OCI-LY7 (cell line): ENCODE measurements at regions of chr2 and their contacts with region 1.

Region 1: DNA sequence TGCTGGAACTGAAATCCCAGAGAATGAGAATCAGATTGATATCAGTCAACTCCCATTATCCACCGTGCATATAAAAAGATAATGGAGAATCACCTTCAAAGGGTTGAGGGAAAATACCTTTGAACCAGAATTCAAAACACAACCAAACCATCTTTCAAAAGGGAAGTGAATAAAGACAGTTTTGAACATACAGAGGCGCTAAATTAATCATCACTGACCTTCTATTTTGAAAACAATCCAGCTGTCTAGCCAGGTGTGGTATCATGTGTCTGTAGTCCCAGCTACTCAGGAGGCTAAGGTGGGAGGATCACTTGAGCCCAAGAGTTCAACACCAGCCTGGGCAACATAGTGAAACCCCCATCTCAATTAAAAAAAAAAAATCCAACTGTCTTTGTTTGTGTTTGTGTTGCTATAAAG is 63.6 kb downstream of the TRABD2A start:
- DNase-seq: peak; percentile 83
- H3K4me3 ChIP-seq: peak overlapping the region; percentile 25
- H3K27ac ChIP-seq: peak overlapping the region; percentile 85
- H3K4me1 ChIP-seq: peaks cover 65% of the 10 kb centered on the region
- CTCF ChIP-seq: no peak

Region 2: GRCh38 chr2:84888401-84889276 is 71.4 kb after region 1 on chr2:
- CTCF ChIA-PET with region 1: no interaction called
- POLR2A ChIA-PET with region 1: interaction called, 3 read pairs
- intact Hi-C with region 1: loop called (anchors 2 kb)
- DNase-seq: peak; percentile 83
- H3K4me3 ChIP-seq: peak overlapping the region; percentile 57
- H3K27ac ChIP-seq: peak overlapping the region; percentile 57
- H3K4me1 ChIP-seq: peaks cover 19% of the 10 kb centered on the region
- CTCF ChIP-seq: no peak

Region 3: DNA sequence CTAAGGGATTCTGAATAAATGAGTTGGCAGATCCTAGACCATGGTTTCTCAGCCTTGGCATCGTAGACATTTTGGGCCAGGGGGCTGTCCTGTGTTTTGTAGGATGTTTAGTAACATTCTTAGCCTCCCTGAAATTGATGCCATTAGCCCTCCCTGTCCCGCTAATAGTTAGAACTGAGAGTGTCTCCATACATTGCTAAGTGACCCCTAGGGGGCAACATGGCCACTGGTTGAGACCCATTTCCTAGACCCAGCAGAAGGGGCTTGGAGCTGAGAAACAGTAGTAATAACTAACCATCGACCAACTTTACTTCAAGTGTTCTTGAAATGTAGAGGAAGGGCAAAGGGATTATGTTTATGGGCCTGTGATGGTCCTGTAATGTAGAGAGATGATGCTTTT is 194.5 kb after region 1 on chr2:
- CTCF ChIA-PET with region 1: no interaction called
- POLR2A ChIA-PET with region 1: no interaction called
- intact Hi-C with region 1: loop called (anchors 5 kb)
- DNase-seq: peak; percentile 14
- H3K4me3 ChIP-seq: no peak overlapping the region
- H3K27ac ChIP-seq: no peak overlapping the region
- H3K4me1 ChIP-seq: peaks cover 28% of the 10 kb centered on the region
- CTCF ChIP-seq: peak; percentile 70